ENCODE measurements at regions of chr11 and their contacts with region 1.

Region 1: DNA sequence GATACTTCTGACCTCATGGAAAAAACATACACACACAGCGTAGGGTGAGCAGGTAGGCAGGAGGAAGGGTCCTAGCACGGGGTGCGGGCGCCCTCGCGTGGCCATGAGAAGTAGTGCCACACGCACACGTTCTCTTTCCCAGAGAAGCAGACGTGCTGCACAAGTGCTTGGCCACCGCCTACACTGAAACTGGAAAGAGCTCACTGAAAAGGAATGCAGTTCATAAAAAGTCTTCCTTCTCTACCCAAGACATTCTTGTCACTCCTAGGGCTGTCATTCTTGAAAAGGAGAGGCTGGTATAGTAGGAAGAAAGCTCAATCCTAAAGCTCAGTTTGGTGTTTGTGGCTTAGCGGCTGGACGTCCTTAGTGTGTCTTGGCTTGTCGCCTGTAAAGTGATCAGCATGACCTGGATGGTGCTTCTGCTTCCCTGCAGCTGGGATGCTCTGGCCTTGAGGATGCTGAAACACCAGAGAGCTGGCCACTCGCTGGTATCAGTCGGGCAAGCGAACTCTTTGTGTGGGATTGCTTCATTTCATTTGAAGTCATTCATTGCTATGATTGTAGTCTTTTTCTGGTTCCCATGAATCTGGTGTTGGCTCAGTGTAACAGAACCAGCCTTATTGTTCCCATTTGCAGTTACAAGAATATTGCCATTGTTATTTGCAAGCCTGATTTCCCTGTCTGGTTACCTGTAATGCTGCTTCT is 303.8 kb downstream of the NTM start:
- DNase-seq: no peak
- H3K4me3 ChIP-seq: no peak overlapping the region
- H3K27ac ChIP-seq: no peak overlapping the region
- H3K4me1 ChIP-seq: no peaks in the 10 kb centered on the region
- H3K27me3 ChIP-seq: no peaks in the 10 kb centered on the region
- CTCF ChIP-seq: peak; percentile 58 to 76 (median 68)

Region 2: DNA sequence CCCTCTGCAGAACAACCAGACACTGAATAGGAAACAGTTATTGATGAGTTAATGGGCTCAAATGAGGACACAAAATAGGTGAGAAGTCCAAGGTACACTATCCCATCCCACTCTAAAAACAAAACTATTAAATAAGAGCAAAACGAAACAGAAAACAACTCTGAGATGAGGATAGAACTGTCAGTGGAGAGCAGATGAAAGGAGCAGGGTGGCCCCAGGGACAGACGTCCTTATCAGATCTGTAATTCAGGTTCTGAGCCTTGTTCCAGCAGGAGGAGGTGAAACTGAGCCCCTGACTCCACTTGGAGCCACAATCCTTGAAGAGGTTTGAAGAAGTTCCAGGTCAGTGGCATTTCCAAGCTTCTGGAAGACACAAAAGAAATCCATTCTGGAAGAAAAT is 749.4 kb before region 1 on chr11:
- intact Hi-C with region 1: loop called (anchors 10 kb)
- DNase-seq: no peak
- H3K4me3 ChIP-seq: no peak overlapping the region
- H3K27ac ChIP-seq: no peak overlapping the region
- H3K4me1 ChIP-seq: no peaks in the 10 kb centered on the region
- H3K27me3 ChIP-seq: no peaks in the 10 kb centered on the region
- CTCF ChIP-seq: no peak

Region 3: DNA sequence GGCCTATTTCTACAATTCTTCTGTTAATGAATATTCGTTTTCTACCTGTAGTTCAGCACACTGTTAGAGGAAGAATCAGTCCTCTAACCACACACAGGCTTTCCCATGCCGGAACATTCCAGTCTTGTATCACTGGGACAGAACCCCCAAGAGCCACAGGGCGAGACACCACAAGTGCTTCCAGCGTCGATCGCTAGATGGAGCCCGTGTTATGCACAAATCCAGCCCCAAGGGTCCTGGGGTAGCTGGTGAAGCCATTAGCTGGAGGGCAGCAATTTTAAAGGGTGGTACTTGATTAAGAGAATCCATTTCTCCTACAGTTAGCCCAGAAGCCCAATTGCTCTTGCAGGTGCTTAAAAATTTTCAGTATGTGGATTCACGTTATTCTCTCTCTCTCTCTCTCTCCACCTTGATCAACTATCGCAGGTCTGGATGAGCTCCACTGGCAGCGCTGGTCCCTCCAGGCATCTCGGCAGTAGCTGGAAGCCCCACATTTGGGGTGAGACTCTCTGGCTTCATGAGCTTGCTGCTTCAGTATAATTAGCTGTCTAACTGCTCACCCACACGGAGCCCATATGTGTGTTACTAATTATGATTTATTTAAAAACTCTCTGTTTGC is 609.7 kb before region 1 on chr11:
- intact Hi-C with region 1: loop called (anchors 5 kb)
- DNase-seq: no peak
- H3K4me3 ChIP-seq: no peak overlapping the region
- H3K27ac ChIP-seq: no peak overlapping the region
- H3K4me1 ChIP-seq: no peaks in the 10 kb centered on the region
- H3K27me3 ChIP-seq: no peaks in the 10 kb centered on the region
- CTCF ChIP-seq: peak in 2 of 3 experiments; percentile 28 to 47

Region 4: GRCh38 chr11:131824771-131825170 is 150.6 kb after region 1 on chr11:
- intact Hi-C with region 1: no loop called
- DNase-seq: no peak
- H3K4me3 ChIP-seq: no peak overlapping the region
- H3K27ac ChIP-seq: no peak overlapping the region
- H3K4me1 ChIP-seq: no peaks in the 10 kb centered on the region
- H3K27me3 ChIP-seq: no peaks in the 10 kb centered on the region
- CTCF ChIP-seq: no peak

Measured in ascending aorta (tissue), 2 donors.